ENCODE measurements at regions of chr5 and their contacts with region 1.

Region 1: DNA sequence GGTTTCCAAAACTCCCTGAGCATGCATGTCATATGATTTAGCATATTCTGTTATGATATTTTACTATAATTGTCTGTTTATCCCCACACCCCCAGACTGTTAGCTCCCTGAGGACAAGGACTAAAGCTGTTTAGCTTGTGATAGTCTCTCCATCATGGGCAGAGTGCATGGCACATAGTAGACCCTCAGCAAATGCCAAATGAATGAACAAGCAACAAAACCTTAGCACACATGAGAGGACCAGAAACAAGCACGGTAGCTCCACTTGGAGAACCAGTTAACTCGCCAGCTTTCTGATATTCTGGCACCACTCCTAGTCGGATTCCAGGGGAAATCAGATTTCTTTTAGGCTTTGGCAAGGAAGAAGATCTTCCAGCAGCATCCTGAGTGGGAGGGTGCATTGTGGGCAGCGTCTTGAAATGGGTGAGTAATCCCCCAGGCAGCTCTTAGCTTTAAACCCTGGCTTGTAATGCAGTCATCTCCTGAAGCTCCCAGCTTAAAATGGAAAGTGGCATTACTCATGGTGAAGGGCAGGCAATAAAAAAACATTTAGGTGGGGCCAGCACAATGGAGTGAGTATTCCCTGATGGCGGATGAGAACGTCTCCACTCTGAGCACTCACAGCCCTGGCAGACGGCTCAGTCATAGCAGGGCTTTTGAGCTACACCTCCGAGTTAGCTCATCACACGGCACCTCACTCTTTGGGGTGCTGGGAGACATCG is 41.1 kb downstream of the FGF1 start:
- DNase-seq: peak; percentile 99
- H3K4me3 ChIP-seq: peak overlapping the region; percentile 42
- CTCF ChIP-seq: no peak

Region 2: GRCh38 chr5:142611154-142611553 is 33.6 kb before region 1 on chr5:
- CTCF ChIA-PET with region 1: interaction called, 208 read pairs
- POLR2A ChIA-PET with region 1: no interaction called
- DNase-seq: no peak
- H3K4me3 ChIP-seq: no peak overlapping the region
- CTCF ChIP-seq: peak; percentile 94

Region 3: GRCh38 chr5:142627383-142628255 is 17.2 kb before region 1 on chr5:
- CTCF ChIA-PET with region 1: interaction called, 20 read pairs
- POLR2A ChIA-PET with region 1: interaction called, 4 read pairs
- DNase-seq: no peak
- H3K4me3 ChIP-seq: no peak overlapping the region
- CTCF ChIP-seq: no peak

Region 4: DNA sequence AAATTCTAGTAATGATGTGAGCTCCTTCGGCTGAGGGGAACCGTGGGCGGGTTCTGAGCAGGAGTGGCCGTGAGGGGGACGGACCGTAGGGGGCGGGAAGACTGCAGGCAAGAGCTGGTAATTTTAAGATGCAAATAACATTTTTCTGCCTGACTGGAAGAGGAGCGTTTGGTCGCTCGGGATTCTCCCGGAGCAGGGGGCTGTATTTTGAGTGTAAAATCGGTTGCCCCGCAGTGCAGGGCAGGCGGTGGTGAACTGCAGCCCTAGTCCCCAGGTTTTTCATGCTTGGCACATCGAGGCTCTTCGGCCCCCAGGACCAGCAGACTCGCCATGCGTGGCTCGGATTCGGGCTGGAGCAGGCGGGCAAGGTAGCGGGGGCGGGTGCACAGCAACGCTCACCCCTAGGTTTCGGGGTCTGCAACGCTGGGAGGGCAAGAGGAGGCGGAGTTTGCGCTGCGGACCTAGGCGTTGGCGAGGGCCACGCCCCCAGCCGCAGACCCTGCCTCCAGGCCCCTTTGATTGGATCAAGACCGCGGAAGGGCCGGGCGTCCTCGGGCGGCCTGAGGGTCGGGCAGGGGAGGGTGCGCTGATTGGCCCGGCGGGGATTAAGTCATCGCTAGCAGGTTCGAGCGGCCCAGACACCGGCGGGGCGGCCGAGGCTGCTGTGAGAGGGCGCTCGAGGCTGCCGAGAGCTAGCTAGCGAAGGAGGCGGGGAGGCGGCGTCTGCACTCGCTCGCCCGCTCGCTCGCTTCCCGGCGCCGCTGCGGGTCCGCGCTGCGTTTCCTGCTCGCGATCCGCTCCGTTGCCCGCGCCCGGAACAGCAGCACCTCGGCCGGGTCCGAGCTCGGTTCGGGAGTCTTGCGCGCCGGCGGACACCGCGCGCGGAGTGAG is 125.2 kb after region 1 on chr5 and contains the start of gene ARHGAP26:
- CTCF ChIA-PET with region 1: no interaction called
- POLR2A ChIA-PET with region 1: no interaction called
- DNase-seq: peak; percentile 65
- H3K4me3 ChIP-seq: peak within 1 kb of the TSS; percentile 99
- CTCF ChIP-seq: peak; percentile 70

Measured in AG04449 (cell line).